Caco-2 (cell line): ENCODE measurements at regions of chr3 and their contacts with region 1.

Region 1: DNA sequence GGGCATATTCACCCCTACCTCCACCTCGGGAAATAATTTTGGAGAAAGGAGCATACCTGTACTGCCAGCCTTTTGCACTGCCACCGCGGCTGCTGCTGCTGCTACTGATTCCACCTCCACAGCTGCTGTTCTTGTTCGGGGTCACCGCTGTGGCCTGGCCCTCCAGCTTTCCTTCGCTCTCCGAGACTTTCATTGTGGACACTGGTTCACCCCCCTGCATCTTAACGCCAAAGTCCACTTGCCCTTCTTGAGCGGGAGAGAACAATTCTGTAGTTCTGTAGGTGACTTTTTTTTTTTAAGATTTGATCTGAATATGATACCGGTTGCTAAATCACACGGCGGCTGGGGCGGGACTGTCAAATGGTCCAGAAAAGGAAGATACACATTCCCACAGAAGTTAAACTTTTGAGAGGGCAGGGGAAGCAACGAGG is 701 bp downstream of the OSBPL11 start:
- DNase-seq: peak; percentile 31 to 42
- H3K4me3 ChIP-seq: peak overlapping the region; percentile 72
- H3K4me3 Mint-ChIP-seq: peak overlapping the region; percentile 94
- H3K27ac Mint-ChIP-seq: peak overlapping the region; percentile 92
- H3K4me1 ChIP-seq: peaks cover 35% of the 10 kb centered on the region
- H3K4me1 Mint-ChIP-seq: peaks cover 8% of the 10 kb centered on the region
- H3K27me3 ChIP-seq: no peaks in the 10 kb centered on the region
- H3K27me3 Mint-ChIP-seq: no peaks in the 10 kb centered on the region
- CTCF ChIP-seq: no peak

Region 2: DNA sequence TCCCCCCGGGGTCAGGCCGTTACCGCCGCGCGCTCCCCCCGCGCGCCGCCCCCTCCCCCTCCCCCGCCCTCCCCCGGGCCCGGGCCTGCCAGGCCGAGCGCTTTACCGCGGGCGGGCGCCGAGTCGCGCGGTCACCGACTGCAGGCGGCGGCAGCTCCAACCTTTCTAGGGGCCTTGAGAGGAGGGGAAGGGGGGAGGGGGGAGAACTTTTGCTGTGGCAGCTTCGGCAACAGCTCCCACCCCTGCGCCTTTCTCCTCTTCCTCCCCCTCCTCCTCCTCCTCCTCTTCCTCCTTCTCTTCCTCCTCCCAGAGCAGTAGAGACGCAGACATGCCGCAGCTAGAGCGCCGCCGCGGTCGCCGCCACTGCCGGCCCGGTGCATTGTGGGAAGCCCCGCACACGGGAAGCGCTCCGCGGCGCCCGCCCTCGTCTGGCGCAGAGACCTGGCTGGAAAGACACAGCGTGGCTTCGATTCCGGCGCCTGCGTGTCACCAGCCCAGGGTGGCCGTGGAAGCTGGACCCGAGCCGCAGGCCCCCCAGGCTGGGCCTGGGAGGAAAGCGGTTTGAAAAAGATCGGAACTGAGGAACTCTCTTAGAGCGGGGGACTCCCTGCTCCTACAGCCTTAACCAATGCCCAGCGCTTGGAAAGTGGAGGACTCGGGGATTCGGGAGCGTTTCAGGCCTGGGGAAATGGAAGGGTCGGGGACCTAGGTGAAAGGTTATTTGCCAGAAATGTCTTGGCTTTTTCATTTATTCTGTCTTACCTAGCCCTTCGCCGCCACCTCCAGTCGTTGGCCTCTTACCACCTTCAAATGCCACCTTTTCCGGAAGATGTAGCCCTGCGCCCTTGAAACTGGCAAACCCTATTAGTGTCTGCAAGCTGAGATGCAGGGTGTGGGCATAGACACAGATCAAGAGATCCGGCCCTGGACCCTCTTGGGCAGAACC is 219.3 kb before region 1 on chr3 and contains the start of gene ZNF148:
- CTCF ChIA-PET with region 1: no interaction called
- POLR2A ChIA-PET with region 1: interaction called, 10 read pairs
- intact Hi-C with region 1: no loop called
- DNase-seq: peak; percentile 89 to 92
- H3K4me3 ChIP-seq: peak within 1 kb of the TSS; percentile 95
- H3K4me3 Mint-ChIP-seq: peak within 1 kb of the TSS; percentile 100
- H3K27ac Mint-ChIP-seq: peak within 1 kb of the TSS; percentile 98
- H3K4me1 ChIP-seq: peaks cover 30% of the 10 kb centered on the region
- H3K4me1 Mint-ChIP-seq: peaks cover 41% of the 10 kb centered on the region
- H3K27me3 ChIP-seq: no peaks in the 10 kb centered on the region
- H3K27me3 Mint-ChIP-seq: no peaks in the 10 kb centered on the region
- CTCF ChIP-seq: no peak
- total RNA-seq, gene ZNF148: 29.4 and 33.3 TPM in 2 replicates

Region 3: GRCh38 chr3:125437631-125438435 is 156.8 kb before region 1 on chr3:
- CTCF ChIA-PET with region 1: no interaction called
- POLR2A ChIA-PET with region 1: interaction called, 14 read pairs
- intact Hi-C with region 1: loop called (anchors 10 kb)
- DNase-seq: peak; percentile 60 to 72
- H3K4me3 ChIP-seq: no peak overlapping the region
- H3K4me3 Mint-ChIP-seq: no peak overlapping the region
- H3K27ac Mint-ChIP-seq: no peak overlapping the region
- H3K4me1 ChIP-seq: peaks cover 33% of the 10 kb centered on the region
- H3K4me1 Mint-ChIP-seq: peaks cover 20% of the 10 kb centered on the region
- H3K27me3 ChIP-seq: no peaks in the 10 kb centered on the region
- H3K27me3 Mint-ChIP-seq: no peaks in the 10 kb centered on the region
- CTCF ChIP-seq: peak; percentile 89 to 93

Region 4: GRCh38 chr3:125519678-125520589 is 74.7 kb before region 1 on chr3 and contains the start of gene SNX4:
- CTCF ChIA-PET with region 1: interaction called, 6 read pairs
- POLR2A ChIA-PET with region 1: interaction called, 10 read pairs
- intact Hi-C with region 1: no loop called
- DNase-seq: peak; percentile 93 to 96
- H3K4me3 ChIP-seq: peak within 1 kb of the TSS; percentile 69
- H3K4me3 Mint-ChIP-seq: peak within 1 kb of the TSS; percentile 92
- H3K27ac Mint-ChIP-seq: peak within 1 kb of the TSS; percentile 91
- H3K4me1 ChIP-seq: no peaks in the 10 kb centered on the region
- H3K4me1 Mint-ChIP-seq: peaks cover 7% of the 10 kb centered on the region
- H3K27me3 ChIP-seq: no peaks in the 10 kb centered on the region
- H3K27me3 Mint-ChIP-seq: no peaks in the 10 kb centered on the region
- CTCF ChIP-seq: no peak
- total RNA-seq, gene SNX4: 54.6 and 59.0 TPM in 2 replicates

Region 5: GRCh38 chr3:125644036-125645010 is 49.7 kb after region 1 on chr3:
- CTCF ChIA-PET with region 1: no interaction called
- POLR2A ChIA-PET with region 1: interaction called, 16 read pairs
- intact Hi-C with region 1: no loop called
- DNase-seq: no peak
- H3K4me3 ChIP-seq: no peak overlapping the region
- H3K4me3 Mint-ChIP-seq: no peak overlapping the region
- H3K27ac Mint-ChIP-seq: no peak overlapping the region
- H3K4me1 ChIP-seq: 0 out of 2 replicates have a peak, but pooled peaks cover 6% of the 10 kb centered on the region
- H3K4me1 Mint-ChIP-seq: no peaks in the 10 kb centered on the region
- H3K27me3 ChIP-seq: no peaks in the 10 kb centered on the region
- H3K27me3 Mint-ChIP-seq: no peaks in the 10 kb centered on the region
- CTCF ChIP-seq: no peak

Region 6: GRCh38 chr3:125916376-125916978 is 321.9 kb after region 1 on chr3:
- CTCF ChIA-PET with region 1: no interaction called
- POLR2A ChIA-PET with region 1: no interaction called
- intact Hi-C with region 1: loop called (anchors 5 kb)
- DNase-seq: peak in 1 of 2 experiments; percentile 97
- H3K4me3 ChIP-seq: peak overlapping the region; percentile 82
- H3K4me3 Mint-ChIP-seq: peak overlapping the region; percentile 69
- H3K27ac Mint-ChIP-seq: peak overlapping the region; percentile 73
- H3K4me1 ChIP-seq: no peaks in the 10 kb centered on the region
- H3K4me1 Mint-ChIP-seq: no peaks in the 10 kb centered on the region
- H3K27me3 ChIP-seq: no peaks in the 10 kb centered on the region
- H3K27me3 Mint-ChIP-seq: no peaks in the 10 kb centered on the region
- CTCF ChIP-seq: peak in 1 of 2 experiments; percentile 30

Region 7: GRCh38 chr3:126329927-126330725 is 735.5 kb after region 1 on chr3:
- CTCF ChIA-PET with region 1: interaction called, 12 read pairs
- POLR2A ChIA-PET with region 1: no interaction called
- intact Hi-C with region 1: no loop called
- DNase-seq: no peak
- H3K4me3 ChIP-seq: no peak overlapping the region
- H3K4me3 Mint-ChIP-seq: no peak overlapping the region
- H3K27ac Mint-ChIP-seq: no peak overlapping the region
- H3K4me1 ChIP-seq: no peaks in the 10 kb centered on the region
- H3K4me1 Mint-ChIP-seq: no peaks in the 10 kb centered on the region
- H3K27me3 ChIP-seq: no peaks in the 10 kb centered on the region
- H3K27me3 Mint-ChIP-seq: peaks cover 5% of the 10 kb centered on the region
- CTCF ChIP-seq: no peak